Activated CD4-positive, alpha-beta memory T cell treated with anti-CD3 and anti-CD28 coated beads, Interleukin-2, amount 10 ng/mL, durations not matched to agents 7 days and 5 days (primary cell): ENCODE measurements at regions of chr17 and their contacts with region 1.

Region 1: GRCh38 chr17:45218895-45219661 is 2.6 kb upstream of the FMNL1 start:
- DNase-seq: peak; percentile 86
- H3K4me3 Mint-ChIP-seq: peak overlapping the region; percentile 85
- H3K27ac Mint-ChIP-seq: peak overlapping the region; percentile 75
- H3K4me1 Mint-ChIP-seq: peaks cover 30% of the 10 kb centered on the region
- H3K27me3 Mint-ChIP-seq: no peaks in the 10 kb centered on the region

Region 2: DNA sequence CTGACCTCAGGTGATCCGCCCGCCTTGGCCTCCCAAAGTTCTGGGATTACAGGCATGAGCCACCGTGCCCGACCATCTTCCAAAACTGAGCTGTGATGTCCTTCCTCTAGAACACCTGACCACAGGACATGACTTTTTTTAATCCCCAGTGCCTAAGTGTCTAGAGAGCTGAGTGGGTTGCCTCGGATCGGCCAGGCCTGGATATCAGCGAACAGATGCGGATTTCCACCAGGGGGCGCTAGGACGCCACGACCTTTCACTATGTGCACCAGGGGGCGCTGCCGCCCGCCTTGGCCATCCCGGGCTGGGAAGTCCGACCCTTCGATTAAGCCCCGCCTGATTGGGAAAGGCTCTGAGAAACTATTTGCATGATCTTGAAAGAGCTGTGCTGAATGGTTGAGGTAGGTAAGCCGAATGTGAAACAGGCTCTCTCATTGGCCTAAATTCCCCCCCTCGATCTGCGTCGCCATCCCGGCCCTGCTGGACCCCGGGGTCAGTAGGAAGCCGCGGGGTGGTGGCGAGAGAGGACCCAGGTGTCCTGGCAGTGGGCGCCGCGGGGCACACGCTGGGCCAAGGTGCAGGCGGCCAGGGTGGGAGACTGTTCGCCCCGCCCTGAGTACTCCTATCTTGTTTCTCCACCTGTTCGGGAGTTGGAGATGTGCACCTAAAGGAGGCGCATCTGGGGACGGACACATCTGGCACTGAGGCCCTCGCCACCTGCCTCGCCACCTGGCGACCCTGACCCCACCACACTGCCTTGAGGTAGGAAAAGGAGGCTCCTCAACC is 83.7 kb before region 1 on chr17 and contains the start of gene ACBD4:
- CTCF ChIA-PET with region 1: interaction called, 34 read pairs
- POLR2A ChIA-PET with region 1: interaction called, 4 read pairs
- DNase-seq: peak; percentile 98
- H3K4me3 Mint-ChIP-seq: peak within 1 kb of the TSS; percentile 87
- H3K27ac Mint-ChIP-seq: peak within 1 kb of the TSS; percentile 66
- H3K4me1 Mint-ChIP-seq: peaks cover 20% of the 10 kb centered on the region
- H3K27me3 Mint-ChIP-seq: peaks cover 9% of the 10 kb centered on the region
- total RNA-seq, gene ACBD4: 15.0 to 17.8 TPM

Region 3: DNA sequence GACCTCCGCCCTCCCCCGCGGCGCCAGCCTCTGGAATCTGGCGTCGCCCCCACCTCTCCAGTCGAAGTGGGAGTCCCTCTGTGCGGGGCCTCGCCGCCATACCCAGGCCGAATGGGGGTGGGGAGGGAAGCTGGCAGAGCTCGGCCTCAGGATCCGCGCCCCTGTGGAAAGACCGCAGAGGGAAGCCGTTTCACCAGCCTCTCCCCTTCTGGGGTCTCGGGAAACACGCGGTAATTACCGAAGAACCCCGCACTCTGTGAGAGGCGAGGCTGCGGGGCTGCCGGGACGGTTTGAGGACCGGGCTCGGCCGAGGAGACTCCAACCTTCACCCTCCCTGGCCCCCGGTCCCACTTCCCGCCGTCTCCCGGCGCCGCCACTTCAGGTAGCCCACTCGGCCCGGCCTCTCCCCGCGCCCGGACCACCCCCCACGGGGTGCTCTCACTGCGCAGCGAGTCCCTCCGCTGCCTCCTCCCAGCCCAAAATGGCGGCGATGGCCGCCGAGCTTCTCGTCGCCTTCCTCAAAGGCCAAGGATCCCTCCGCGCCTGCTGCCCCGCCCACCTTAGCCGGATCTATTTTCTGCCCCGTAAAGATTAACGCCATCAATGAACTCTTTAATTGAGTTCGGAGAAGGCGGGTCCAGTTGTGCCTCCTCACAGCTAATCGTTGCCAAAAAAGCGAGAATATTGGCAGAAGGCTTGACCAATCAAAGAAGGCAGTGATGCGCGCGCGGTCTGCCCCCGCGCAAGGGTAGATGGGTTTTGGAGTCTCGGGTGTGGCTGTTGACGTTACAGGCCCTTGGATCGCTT is 57.9 kb before region 1 on chr17:
- CTCF ChIA-PET with region 1: interaction called, 3 read pairs
- POLR2A ChIA-PET with region 1: interaction called, 10 read pairs
- DNase-seq: peak; percentile 98
- H3K4me3 Mint-ChIP-seq: peak overlapping the region; percentile 98
- H3K27ac Mint-ChIP-seq: peak overlapping the region; percentile 90
- H3K4me1 Mint-ChIP-seq: peaks cover 46% of the 10 kb centered on the region
- H3K27me3 Mint-ChIP-seq: no peaks in the 10 kb centered on the region

Region 4: GRCh38 chr17:45256114-45256966 is 37.3 kb after region 1 on chr17:
- CTCF ChIA-PET with region 1: interaction called, 18 read pairs
- POLR2A ChIA-PET with region 1: interaction called, 528 read pairs
- DNase-seq: no peak
- H3K4me3 Mint-ChIP-seq: no peak overlapping the region
- H3K27ac Mint-ChIP-seq: no peak overlapping the region
- H3K4me1 Mint-ChIP-seq: peaks cover 29% of the 10 kb centered on the region
- H3K27me3 Mint-ChIP-seq: no peaks in the 10 kb centered on the region

Region 5: DNA sequence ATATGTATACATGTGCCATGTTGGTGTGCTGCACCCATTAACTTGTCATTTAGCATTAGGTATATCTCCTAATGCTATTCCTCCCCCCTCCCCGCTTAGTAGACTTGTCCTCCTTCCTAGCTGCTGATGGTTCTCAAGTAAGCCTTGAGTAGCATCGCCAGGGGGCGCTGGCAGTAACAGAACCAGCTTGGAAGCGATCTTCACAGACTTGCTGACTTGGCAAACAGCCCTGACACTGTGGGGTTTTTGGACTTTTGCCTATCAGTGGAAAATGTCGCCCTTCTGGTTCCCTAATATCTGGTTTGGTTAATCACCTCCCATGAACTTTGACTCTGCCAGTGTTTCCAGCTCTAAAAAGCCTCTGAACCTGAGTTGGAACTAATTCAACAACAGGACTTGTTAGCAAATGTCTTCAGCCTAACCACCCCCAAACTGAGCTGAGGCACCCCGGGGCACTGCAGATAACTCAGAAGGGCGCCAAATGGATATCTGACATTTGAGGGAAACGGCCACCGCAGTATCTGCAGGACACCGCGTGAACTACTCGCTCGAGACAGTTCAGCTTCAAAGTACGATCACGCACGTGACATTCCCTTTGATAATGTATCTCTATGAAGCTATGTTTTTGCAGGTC is 58.3 kb after region 1 on chr17:
- CTCF ChIA-PET with region 1: interaction called, 43 read pairs
- POLR2A ChIA-PET with region 1: interaction called, 11 read pairs
- DNase-seq: peak; percentile 92
- H3K4me3 Mint-ChIP-seq: no peak overlapping the region
- H3K27ac Mint-ChIP-seq: no peak overlapping the region
- H3K4me1 Mint-ChIP-seq: peaks cover 17% of the 10 kb centered on the region
- H3K27me3 Mint-ChIP-seq: no peaks in the 10 kb centered on the region

Region 6: GRCh38 chr17:45385331-45385997 is 166.4 kb after region 1 on chr17:
- CTCF ChIA-PET with region 1: interaction called, 40 read pairs
- POLR2A ChIA-PET with region 1: interaction called, 3 read pairs
- DNase-seq: peak; percentile 90
- H3K4me3 Mint-ChIP-seq: no peak overlapping the region
- H3K27ac Mint-ChIP-seq: no peak overlapping the region
- H3K4me1 Mint-ChIP-seq: peaks cover 20% of the 10 kb centered on the region
- H3K27me3 Mint-ChIP-seq: peaks cover 28% of the 10 kb centered on the region